ENCODE measurements at regions of chr1 and their contacts with region 1.

Region 1: DNA sequence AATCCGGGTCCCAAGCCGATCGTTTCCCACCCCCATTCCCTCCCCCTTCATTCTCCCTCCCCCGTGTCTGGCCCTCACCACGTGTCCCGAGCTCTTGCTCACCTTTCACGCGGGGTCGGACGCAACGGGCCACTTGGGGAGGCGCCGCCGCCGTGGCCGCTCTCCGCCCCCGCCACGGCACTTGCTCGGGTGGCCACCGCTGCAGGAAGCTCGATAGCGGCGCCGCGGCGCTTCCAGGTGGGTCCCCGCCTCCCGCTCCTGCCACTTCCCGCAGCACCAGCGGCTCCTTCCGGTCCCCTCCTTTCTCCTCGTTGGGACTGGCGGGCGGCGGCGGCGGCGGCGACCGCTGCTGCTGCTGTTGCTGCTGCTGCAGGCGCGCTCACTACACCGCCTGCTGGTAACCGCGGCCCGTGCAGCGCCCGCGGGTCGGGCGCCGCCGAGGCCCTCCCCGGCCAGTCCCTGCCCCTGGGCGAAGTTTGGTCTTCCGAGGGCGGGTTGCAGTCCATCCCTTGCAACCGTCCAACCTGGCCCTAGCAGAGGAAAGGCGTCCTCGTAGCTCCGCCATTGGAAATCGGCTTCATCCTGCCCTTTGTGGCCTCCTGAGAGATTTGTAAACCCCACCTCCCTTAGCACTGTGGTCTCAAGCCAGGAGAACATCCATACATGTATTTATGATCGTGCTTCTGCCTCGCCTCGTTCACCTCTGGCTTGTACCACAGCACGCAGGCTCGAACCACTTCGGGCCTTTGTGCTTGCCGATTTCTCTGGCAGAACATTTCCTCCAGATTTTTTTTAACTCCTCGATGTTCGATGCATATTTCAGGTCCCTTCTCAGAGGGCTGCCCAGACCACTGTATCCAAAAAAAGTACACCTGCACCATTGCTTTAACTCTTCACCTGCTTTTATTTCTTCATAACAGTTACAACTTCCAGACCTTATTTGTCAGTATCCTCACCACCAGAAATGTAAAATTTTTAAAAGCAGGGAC is 996 bp upstream of the ZZZ3 start:
- DNase-seq: peak; percentile 87
- CTCF ChIP-seq: peak; percentile 89

Region 2: DNA sequence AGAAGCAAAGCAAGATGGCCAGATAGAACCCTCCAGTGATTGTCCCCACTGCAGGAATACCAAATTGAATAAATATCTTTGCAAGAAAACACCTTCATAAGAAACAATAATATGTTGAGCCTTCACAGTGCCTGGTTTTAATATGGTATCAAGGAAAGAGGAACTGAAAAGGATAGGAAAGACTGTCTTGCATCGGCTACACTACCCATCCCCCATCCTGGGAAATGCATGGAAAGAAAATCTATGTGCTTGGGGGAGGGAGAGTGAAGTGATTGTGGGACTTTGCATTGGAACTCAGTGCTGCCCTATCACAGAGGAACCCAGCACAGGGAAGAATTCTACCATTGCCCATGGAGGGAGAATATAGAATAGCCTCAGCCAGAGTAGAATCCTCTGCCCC is 430.2 kb before region 1 on chr1:
- CTCF ChIA-PET with region 1: no interaction called
- POLR2A ChIA-PET with region 1: no interaction called
- DNase-seq: no peak
- CTCF ChIP-seq: no peak

Region 3: DNA sequence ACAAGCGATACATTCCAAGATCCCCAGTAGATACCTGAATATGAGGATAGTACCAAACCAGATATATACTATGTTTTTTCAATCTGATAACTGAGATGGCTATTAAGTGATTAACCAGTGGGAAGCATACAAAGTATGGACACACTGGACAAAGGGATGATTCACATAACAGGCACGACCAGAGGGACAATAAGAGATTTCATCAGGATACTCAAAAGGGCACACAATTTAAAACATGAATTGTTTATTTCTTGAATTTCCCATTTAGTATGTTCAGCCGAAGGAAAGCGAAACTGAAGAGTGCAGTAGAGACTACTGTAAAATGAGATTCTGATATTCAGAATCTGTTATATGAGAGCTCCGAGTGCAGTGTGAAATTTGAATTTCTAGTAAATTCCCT is 11.6 kb before region 1 on chr1:
- CTCF ChIA-PET with region 1: interaction called, 15 read pairs
- POLR2A ChIA-PET with region 1: no interaction called
- DNase-seq: no peak
- CTCF ChIP-seq: no peak